ENCODE measurements at regions of chr6 and their contacts with region 1.

Region 1: DNA sequence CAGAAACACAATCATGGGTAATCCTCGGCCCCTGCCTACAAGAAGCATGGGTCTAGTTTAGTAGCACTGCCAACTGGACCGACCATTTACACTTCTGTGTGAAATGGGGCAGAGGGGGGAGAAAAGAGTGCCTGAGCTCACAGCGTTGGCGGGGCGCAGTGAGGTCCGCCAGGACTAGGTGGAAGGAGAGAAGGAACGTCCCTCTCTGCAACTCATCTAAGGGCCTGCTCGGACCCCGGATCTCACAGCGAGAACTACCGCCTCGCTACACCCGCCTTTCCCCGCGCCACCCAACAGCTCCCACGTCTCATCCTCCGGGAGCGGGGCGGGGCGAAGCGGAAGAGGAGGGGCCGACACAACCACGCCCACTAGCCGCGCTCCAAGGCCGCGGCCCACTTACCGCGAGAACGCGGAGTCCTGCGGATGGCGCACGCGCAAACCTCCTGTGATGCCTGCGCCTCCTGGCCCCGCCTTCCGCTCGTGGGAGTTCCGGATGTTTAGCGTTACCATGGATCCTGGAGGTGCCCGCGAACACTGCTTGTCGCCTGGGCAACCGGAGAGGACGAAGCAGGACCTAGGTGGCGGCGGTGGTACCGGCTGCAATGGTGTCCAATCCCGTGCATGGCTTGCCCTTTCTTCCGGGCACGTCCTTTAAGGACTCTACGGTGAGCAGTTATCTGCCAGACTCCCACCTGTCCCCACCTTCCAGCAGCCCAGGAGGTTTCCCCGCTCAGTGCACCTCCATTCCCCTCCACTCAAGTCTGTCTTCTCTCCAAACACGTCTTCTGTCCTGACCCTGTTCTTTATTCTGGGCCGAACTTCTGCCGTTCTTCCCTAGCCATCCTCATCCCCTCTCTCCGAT is at the start of gene EFHC1:
- DNase-seq: peak; percentile 95 to 99 (median 97)
- ATAC-seq: peak; percentile 88
- H3K4me3 ChIP-seq: peak within 1 kb of the TSS; percentile 80
- H3K4me3 Mint-ChIP-seq: no peak within 1 kb of the TSS
- H3K27ac ChIP-seq: peak within 1 kb of the TSS; percentile 33 to 57
- H3K27ac Mint-ChIP-seq: no peak within 1 kb of the TSS
- H3K4me1 ChIP-seq: peaks cover 23% of the 10 kb centered on the region
- H3K4me1 Mint-ChIP-seq: peaks cover 19% of the 10 kb centered on the region
- H3K27me3 ChIP-seq: no peaks in the 10 kb centered on the region
- H3K27me3 Mint-ChIP-seq: no peaks in the 10 kb centered on the region
- CTCF ChIP-seq: no peak
- total RNA-seq, gene EFHC1: 3.4 to 4.8 TPM

Region 2: GRCh38 chr6:52162940-52163908 is 256.8 kb before region 1 on chr6:
- CTCF ChIA-PET with region 1: no interaction called
- POLR2A ChIA-PET with region 1: no interaction called
- intact Hi-C with region 1: loop called in 1 of 2 experiments (anchors 5 kb)
- DNase-seq: peak in 3 of 14 experiments; percentile 50 to 62 (median 60)
- ATAC-seq: peak; percentile 59
- H3K4me3 ChIP-seq: no peak overlapping the region
- H3K4me3 Mint-ChIP-seq: no peak overlapping the region
- H3K27ac ChIP-seq: no peak overlapping the region
- H3K27ac Mint-ChIP-seq: no peak overlapping the region
- H3K4me1 ChIP-seq: no peaks in the 10 kb centered on the region
- H3K4me1 Mint-ChIP-seq: no peaks in the 10 kb centered on the region
- H3K27me3 ChIP-seq: peaks cover 0 to 3% of the 10 kb centered on the region in 2 experiments
- H3K27me3 Mint-ChIP-seq: peaks cover 9% of the 10 kb centered on the region
- CTCF ChIP-seq: peak; percentile 58

Region 3: GRCh38 chr6:52407467-52407866 is 12.6 kb before region 1 on chr6:
- CTCF ChIA-PET with region 1: interaction called, 10 read pairs
- POLR2A ChIA-PET with region 1: interaction called, 3 read pairs
- intact Hi-C with region 1: no loop called
- DNase-seq: peak in 4 of 14 experiments; percentile 19 to 69 (median 61)
- ATAC-seq: peak; percentile 97
- H3K4me3 ChIP-seq: no peak overlapping the region
- H3K4me3 Mint-ChIP-seq: no peak overlapping the region
- H3K27ac ChIP-seq: no peak overlapping the region
- H3K27ac Mint-ChIP-seq: peak overlapping the region; percentile 81
- H3K4me1 ChIP-seq: peaks cover 11% of the 10 kb centered on the region
- H3K4me1 Mint-ChIP-seq: peaks cover 38% of the 10 kb centered on the region
- H3K27me3 ChIP-seq: no peaks in the 10 kb centered on the region
- H3K27me3 Mint-ChIP-seq: no peaks in the 10 kb centered on the region
- CTCF ChIP-seq: peak; percentile 57

Region 4: DNA sequence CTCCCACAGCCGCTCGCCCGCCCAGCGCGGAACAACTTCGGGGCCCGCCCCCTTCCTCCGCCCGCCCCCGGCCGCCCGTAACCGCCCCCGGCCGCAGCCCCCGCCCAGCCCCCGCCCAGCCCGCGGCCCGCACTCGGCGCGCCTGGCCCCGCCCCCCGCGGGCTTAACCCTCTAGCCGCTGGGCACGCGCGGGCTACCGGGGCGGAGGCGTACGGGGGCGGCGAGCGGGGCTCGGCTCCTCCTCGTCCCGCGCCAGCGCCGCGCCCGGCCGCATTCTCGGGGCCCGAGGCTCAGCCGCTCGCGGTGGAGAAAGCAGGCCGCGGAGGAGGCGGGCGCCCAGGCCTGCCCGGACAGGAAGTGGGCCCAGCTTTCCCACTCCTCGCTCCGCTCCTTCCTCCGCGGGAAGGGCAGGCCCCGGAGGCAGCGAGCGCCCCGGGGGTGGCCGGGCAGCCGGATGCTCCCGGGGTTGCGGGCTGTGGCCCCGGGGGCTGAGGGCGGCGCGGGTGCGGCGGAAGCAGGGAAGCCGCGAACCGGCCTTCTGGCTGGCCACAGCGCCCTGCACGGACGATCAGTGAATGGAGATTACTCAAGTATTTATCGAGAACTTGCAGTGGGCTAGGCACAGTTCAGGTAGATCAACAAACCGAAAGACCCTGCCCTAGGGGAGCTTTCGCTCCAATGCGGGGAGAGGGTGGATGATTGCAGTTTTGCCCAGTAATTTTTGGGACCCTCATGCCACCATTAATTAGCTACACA is 157.2 kb after region 1 on chr6 and contains the start of gene TRAM2:
- CTCF ChIA-PET with region 1: interaction called, 14 read pairs
- POLR2A ChIA-PET with region 1: interaction called, 8 read pairs
- intact Hi-C with region 1: loop called (anchors 1 to 2 kb)
- DNase-seq: peak; percentile 61 to 92 (median 75)
- ATAC-seq: peak; percentile 67
- H3K4me3 ChIP-seq: peak within 1 kb of the TSS; percentile 69
- H3K4me3 Mint-ChIP-seq: peak within 1 kb of the TSS; percentile 86
- H3K27ac ChIP-seq: peak within 1 kb of the TSS in 1 of 2 donors; percentile 60
- H3K27ac Mint-ChIP-seq: peak within 1 kb of the TSS; percentile 86
- H3K4me1 ChIP-seq: peaks cover 39% of the 10 kb centered on the region
- H3K4me1 Mint-ChIP-seq: peaks cover 56% of the 10 kb centered on the region
- H3K27me3 ChIP-seq: no peaks in the 10 kb centered on the region
- H3K27me3 Mint-ChIP-seq: no peaks in the 10 kb centered on the region
- CTCF ChIP-seq: no peak
- total RNA-seq, gene TRAM2: 7.1 to 7.6 TPM

Region 5: GRCh38 chr6:52995913-52996645 is 576.0 kb after region 1 on chr6:
- CTCF ChIA-PET with region 1: no interaction called
- POLR2A ChIA-PET with region 1: no interaction called
- intact Hi-C with region 1: loop called in 1 of 2 experiments (anchors 5 kb)
- DNase-seq: peak in 13 of 14 experiments; percentile 2 to 75 (median 27)
- ATAC-seq: peak; percentile 7
- H3K4me3 ChIP-seq: peak overlapping the region; percentile 74
- H3K4me3 Mint-ChIP-seq: peak overlapping the region; percentile 91
- H3K27ac ChIP-seq: no peak overlapping the region
- H3K27ac Mint-ChIP-seq: peak overlapping the region; percentile 100
- H3K4me1 ChIP-seq: peaks cover 15% of the 10 kb centered on the region
- H3K4me1 Mint-ChIP-seq: peaks cover 24% of the 10 kb centered on the region
- H3K27me3 ChIP-seq: no peaks in the 10 kb centered on the region
- H3K27me3 Mint-ChIP-seq: peaks cover 14% of the 10 kb centered on the region
- CTCF ChIP-seq: no peak

Region 6: DNA sequence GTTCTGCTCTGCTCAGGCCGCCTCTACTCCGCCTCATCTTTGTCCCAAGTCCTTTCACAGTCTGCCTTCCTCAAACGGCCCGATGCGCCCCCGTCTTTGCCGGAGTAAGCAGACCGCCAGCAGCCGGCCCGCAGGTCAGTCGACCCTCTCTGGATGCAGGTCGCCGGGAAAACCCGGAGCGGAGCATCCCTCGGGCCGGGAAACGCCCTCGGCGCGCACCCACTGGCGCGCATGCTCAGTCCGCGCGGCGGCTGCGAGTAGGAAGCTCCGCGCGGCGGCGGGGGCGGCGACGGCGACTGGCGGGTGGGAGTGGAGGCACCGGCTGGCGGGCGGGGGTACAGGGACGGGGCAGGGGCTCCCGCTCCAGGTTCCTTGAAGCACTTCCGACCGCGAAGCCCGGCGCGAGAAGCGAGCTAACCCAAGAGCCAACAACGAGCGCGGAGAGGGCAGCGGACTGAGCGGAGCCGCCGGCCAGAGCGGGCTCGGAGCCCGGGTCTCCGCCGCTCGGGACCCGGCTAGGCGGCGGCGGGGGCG is 1374.7 kb after region 1 on chr6 and contains the start of gene LRRC1:
- CTCF ChIA-PET with region 1: no interaction called
- POLR2A ChIA-PET with region 1: no interaction called
- intact Hi-C with region 1: loop called in 1 of 2 experiments (anchors 10 kb)
- DNase-seq: peak; percentile 65 to 91 (median 78)
- ATAC-seq: peak; percentile 63
- H3K4me3 ChIP-seq: peak within 1 kb of the TSS; percentile 83
- H3K4me3 Mint-ChIP-seq: peak within 1 kb of the TSS; percentile 97
- H3K27ac ChIP-seq: no peak within 1 kb of the TSS
- H3K27ac Mint-ChIP-seq: peak within 1 kb of the TSS; percentile 82
- H3K4me1 ChIP-seq: peaks cover 28% of the 10 kb centered on the region
- H3K4me1 Mint-ChIP-seq: peaks cover 34% of the 10 kb centered on the region
- H3K27me3 ChIP-seq: peaks cover 5 to 13% of the 10 kb centered on the region in 2 experiments
- H3K27me3 Mint-ChIP-seq: peaks cover 13% of the 10 kb centered on the region
- CTCF ChIP-seq: no peak
- total RNA-seq, gene LRRC1: 0.78 to 1.1 TPM